Panc1 (cell line): ENCODE measurements at regions of chr1 and their contacts with region 1.

Region 1: DNA sequence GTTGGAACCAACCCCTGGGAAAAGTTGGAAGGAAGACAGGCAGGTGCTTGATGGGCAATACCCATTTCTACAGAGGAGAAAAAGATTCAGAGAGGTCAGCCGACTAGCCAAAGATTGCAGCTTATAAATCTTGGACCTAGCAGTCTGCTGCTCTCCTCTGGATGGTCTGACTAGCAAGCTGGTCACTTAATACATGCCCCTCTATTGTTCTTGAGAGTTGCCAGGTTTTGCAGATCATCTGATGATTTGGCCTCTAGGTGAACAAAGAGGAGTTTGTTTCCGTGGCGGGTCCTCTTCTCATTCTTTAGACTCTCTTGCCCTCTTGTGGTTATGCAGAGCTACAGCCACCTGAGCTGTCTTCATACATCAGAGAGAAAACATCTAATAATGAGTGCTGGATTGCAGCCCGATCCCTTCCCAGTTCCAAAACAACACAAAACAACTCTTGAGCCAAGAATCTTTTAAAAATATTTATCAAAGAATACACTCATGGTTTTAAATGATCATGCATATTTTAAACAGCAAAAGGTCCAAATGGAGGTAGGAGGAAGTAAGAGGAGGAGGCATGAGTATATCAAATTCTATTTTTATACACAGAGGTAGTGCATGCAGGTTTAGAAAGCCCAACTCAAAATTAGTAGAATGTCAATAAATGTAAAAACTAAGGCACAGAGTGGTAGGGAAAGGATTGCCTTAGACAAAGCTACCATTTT is 115.7 kb downstream of the SLC30A10 start:
- DNase-seq: peak; percentile 57
- ATAC-seq: peak; percentile 93
- H3K4me3 ChIP-seq: no peak overlapping the region
- H3K27ac ChIP-seq: no peak overlapping the region
- H3K4me1 ChIP-seq: no peaks in the 10 kb centered on the region
- H3K27me3 ChIP-seq: peaks cover 39% of the 10 kb centered on the region
- CTCF ChIP-seq: peak; percentile 85

Region 2: GRCh38 chr1:218171285-218171893 is 1641.3 kb before region 1 on chr1:
- CTCF ChIA-PET with region 1: no interaction called
- POLR2A ChIA-PET with region 1: no interaction called
- in situ Hi-C with region 1: no loop called
- intact Hi-C with region 1: loop called (anchors 10 kb)
- DNase-seq: peak; percentile 38
- ATAC-seq: no peak
- H3K4me3 ChIP-seq: no peak overlapping the region
- H3K27ac ChIP-seq: no peak overlapping the region
- H3K4me1 ChIP-seq: no peaks in the 10 kb centered on the region
- H3K27me3 ChIP-seq: peaks cover 13% of the 10 kb centered on the region
- CTCF ChIP-seq: peak; percentile 75; the same call in 1 of the 2 replicates

Region 3: GRCh38 chr1:219209578-219209977 is 603.1 kb before region 1 on chr1:
- CTCF ChIA-PET with region 1: no interaction called
- POLR2A ChIA-PET with region 1: no interaction called
- in situ Hi-C with region 1: no loop called
- intact Hi-C with region 1: loop called (anchors 10 kb)
- DNase-seq: no peak
- ATAC-seq: no peak
- H3K4me3 ChIP-seq: no peak overlapping the region
- H3K27ac ChIP-seq: no peak overlapping the region
- H3K4me1 ChIP-seq: no peaks in the 10 kb centered on the region
- H3K27me3 ChIP-seq: no peaks in the 10 kb centered on the region
- CTCF ChIP-seq: no peak

Region 4: GRCh38 chr1:219660666-219661463 is 151.8 kb before region 1 on chr1:
- CTCF ChIA-PET with region 1: interaction called, 3 read pairs
- POLR2A ChIA-PET with region 1: no interaction called
- in situ Hi-C with region 1: no loop called
- intact Hi-C with region 1: loop called (anchors 5 kb)
- DNase-seq: peak; percentile 71
- ATAC-seq: peak; percentile 96
- H3K4me3 ChIP-seq: peak overlapping the region in 1 of 2 experiments; percentile 26; a peak in 2 of 4 replicates
- H3K27ac ChIP-seq: no peak overlapping the region
- H3K4me1 ChIP-seq: no peaks in the 10 kb centered on the region
- H3K27me3 ChIP-seq: no peaks in the 10 kb centered on the region; the same call in 1 of the 2 replicates
- CTCF ChIP-seq: peak; percentile 95